WTC11 (cell line): ENCODE measurements at regions of chr9 and their contacts with region 1.

Region 1: GRCh38 chr9:114291064-114291474 is 31.8 kb upstream of the ORM1 start:
- DNase-seq: peak; percentile 88
- ATAC-seq: peak; percentile 65
- H3K4me3 Mint-ChIP-seq: no peak overlapping the region
- H3K27ac Mint-ChIP-seq: no peak overlapping the region
- H3K4me1 Mint-ChIP-seq: peaks cover 7% of the 10 kb centered on the region
- H3K27me3 Mint-ChIP-seq: no peaks in the 10 kb centered on the region
- CTCF ChIP-seq: peak; percentile 95

Region 2: DNA sequence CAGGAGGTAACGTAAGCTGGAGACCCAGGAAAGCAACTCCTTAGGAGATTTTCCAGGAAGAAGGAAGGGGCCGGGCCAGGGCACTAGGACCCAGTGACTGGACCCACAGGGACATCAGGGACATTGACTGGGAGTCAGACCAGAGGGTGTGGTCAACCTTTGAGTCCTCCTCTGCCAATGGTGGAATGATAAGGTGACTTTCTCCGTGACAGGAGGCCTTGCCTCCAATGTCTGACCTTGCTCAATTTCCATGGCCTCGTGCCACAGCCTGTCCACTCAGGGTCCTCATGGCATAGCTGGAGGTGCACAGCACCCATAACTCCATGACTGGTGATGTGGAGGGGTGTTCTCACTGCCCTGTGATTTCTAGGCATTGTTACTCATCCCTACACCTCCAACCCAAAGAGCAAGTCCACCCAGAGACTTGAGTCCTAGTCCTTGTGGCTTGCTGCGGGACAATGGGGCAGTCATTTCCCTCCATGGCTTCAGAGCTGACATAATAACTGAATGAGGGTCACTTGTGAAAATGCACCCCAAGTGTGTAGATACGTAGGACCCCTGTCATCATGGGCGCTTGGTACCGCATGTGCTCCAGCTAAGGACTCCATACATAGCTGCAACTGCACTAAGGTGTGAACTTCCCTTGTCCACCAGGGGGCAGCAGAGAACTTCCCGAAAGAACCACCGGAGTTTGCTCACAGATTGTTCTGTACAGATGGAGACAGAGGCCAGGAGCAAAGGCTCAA is 208.9 kb before region 1 on chr9:
- CTCF ChIA-PET with region 1: interaction called, 109 read pairs
- POLR2A ChIA-PET with region 1: no interaction called
- DNase-seq: peak; percentile 92
- ATAC-seq: peak; percentile 91
- H3K4me3 Mint-ChIP-seq: no peak overlapping the region
- H3K27ac Mint-ChIP-seq: no peak overlapping the region
- H3K4me1 Mint-ChIP-seq: no peaks in the 10 kb centered on the region
- H3K27me3 Mint-ChIP-seq: peaks cover 35% of the 10 kb centered on the region
- CTCF ChIP-seq: peak; percentile 92

Region 3: DNA sequence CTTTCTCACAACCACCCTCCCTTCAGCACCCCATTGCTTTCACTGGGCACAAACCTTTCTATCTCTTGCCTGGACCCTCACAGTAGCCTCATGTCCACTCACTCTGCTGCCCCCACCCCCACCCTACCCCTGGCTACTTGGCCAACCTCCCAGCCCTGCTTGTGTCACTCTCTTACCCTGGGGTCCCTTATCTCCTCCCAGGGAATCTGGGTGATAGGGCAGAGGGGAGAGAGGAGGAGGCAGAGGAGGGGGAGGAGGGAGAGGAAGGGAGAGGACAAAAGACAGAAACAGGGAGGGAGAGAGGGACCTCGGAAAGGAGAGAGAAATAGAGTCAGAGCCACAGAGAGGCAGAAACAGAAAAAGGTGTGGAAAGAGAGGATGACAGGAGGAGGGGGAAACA is 166.9 kb before region 1 on chr9:
- CTCF ChIA-PET with region 1: interaction called, 10 read pairs
- POLR2A ChIA-PET with region 1: no interaction called
- DNase-seq: no peak
- ATAC-seq: no peak
- H3K4me3 Mint-ChIP-seq: no peak overlapping the region
- H3K27ac Mint-ChIP-seq: no peak overlapping the region
- H3K4me1 Mint-ChIP-seq: peaks cover 9% of the 10 kb centered on the region
- H3K27me3 Mint-ChIP-seq: peaks cover 37% of the 10 kb centered on the region
- CTCF ChIP-seq: no peak

Region 4: DNA sequence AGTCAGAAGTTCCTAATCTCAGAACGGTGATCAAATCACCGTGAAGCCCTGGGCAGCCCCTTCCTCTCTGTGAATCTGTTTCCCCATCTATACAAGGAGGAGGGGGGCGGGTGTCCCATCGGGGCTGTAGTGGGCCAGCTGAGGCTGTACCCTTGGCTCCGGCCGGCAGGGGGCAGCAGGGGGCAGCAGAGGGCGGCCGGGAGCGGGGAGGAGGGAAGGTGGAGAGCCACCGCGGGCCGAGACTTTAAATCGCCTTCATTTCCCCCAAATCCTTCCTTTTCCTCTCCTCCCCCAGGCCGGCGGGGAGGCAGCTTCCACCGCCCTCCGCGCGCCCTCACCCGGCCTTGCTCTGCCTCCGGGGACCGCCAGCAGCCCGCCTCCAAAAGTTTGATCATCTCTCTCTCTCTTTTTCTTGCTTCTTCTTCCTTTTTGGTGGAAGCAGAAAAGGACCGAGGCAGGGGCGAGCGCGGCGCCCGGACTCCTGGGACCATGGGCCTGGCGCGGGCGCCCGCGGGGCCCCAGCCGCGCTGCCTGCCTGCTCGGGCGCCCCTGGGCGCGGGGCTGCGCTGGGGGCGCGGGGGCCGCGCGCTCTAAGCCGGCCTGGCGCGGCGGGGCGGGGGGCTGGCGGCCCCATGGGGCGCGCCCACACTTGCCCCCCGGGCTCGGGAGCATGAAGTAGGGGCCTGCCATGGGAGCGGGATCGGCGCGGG is 135.7 kb before region 1 on chr9 and contains the start of gene COL27A1:
- CTCF ChIA-PET with region 1: interaction called, 19 read pairs
- POLR2A ChIA-PET with region 1: no interaction called
- DNase-seq: peak; percentile 96
- ATAC-seq: peak; percentile 77
- H3K4me3 Mint-ChIP-seq: peak within 1 kb of the TSS; percentile 89
- H3K27ac Mint-ChIP-seq: 0 out of 2 replicates have a peak within 1 kb of the TSS, but pooled peaks have one; percentile 8
- H3K4me1 Mint-ChIP-seq: peaks cover 35% of the 10 kb centered on the region
- H3K27me3 Mint-ChIP-seq: peaks cover 57% of the 10 kb centered on the region
- CTCF ChIP-seq: peak; percentile 89
- total RNA-seq, gene COL27A1: 34.5 to 47.5 TPM (median 36.9 TPM) in 3 replicates

Region 5: GRCh38 chr9:114238891-114239875 is 51.9 kb before region 1 on chr9:
- CTCF ChIA-PET with region 1: interaction called, 23 read pairs
- POLR2A ChIA-PET with region 1: no interaction called
- DNase-seq: peak; percentile 24
- ATAC-seq: peak; percentile 80
- H3K4me3 Mint-ChIP-seq: no peak overlapping the region
- H3K27ac Mint-ChIP-seq: no peak overlapping the region
- H3K4me1 Mint-ChIP-seq: no peaks in the 10 kb centered on the region
- H3K27me3 Mint-ChIP-seq: no peaks in the 10 kb centered on the region
- CTCF ChIP-seq: no peak

Region 6: DNA sequence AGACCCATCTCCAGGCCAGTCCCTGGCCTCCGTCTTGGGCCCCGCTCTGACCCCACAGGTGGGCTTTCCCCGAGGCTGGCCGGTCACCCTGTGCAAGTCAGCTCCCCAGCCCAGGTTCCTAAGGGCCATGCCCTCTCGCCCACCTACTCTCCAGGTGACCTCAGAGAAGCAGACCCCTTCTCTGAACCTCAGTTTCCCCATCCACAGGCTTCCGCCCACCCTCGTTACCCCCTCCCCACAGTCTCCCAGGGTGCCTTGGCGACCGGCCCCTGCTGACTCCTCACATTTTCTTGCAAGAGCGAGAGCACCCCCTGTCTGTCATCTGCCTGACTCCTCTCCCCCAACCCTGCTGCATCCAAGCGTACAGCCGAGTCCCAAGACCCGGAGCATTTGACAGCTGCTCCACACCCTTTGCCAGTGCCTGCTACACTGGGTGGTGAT is 19.4 kb before region 1 on chr9:
- CTCF ChIA-PET with region 1: interaction called, 13 read pairs
- POLR2A ChIA-PET with region 1: no interaction called
- DNase-seq: peak; percentile 58
- ATAC-seq: peak; percentile 73
- H3K4me3 Mint-ChIP-seq: no peak overlapping the region
- H3K27ac Mint-ChIP-seq: no peak overlapping the region
- H3K4me1 Mint-ChIP-seq: no peaks in the 10 kb centered on the region
- H3K27me3 Mint-ChIP-seq: no peaks in the 10 kb centered on the region
- CTCF ChIP-seq: no peak